Transverse colon (tissue), 4 donors: ENCODE measurements at regions of chr1 and their contacts with region 1.

Region 1: GRCh38 chr1:151399890-151400495 is 620 bp downstream of the PSMB4 start:
- DNase-seq: no peak
- H3K4me3 ChIP-seq: peak overlapping the region; percentile 78 to 100 (median 83)
- H3K27ac ChIP-seq: peak overlapping the region; percentile 89 to 97 (median 92)
- H3K4me1 ChIP-seq: peaks cover 7 to 17% (median 8%) of the 10 kb centered on the region in 4 donors
- H3K27me3 ChIP-seq: no peaks in the 10 kb centered on the region
- CTCF ChIP-seq: no peak
- EP300 ChIP-seq: no peak
- POLR2A ChIP-seq: no peak

Region 2: GRCh38 chr1:151309811-151310323 is 90.1 kb before region 1 on chr1:
- in situ Hi-C with region 1: loop called in 1 of 4 experiments (anchors 10 kb)
- intact Hi-C with region 1: no loop called
- DNase-seq: no peak
- H3K4me3 ChIP-seq: no peak overlapping the region
- H3K27ac ChIP-seq: peak overlapping the region; percentile 70 to 82 (median 78)
- H3K4me1 ChIP-seq: peaks cover 7 to 48% (median 36%) of the 10 kb centered on the region in 4 donors
- H3K27me3 ChIP-seq: no peaks in the 10 kb centered on the region
- CTCF ChIP-seq: no peak
- EP300 ChIP-seq: no peak
- POLR2A ChIP-seq: no peak

Region 3: GRCh38 chr1:151372061-151372934 is 27.7 kb before region 1 on chr1 and contains the start of gene SELENBP1:
- in situ Hi-C with region 1: no loop called
- intact Hi-C with region 1: loop called (anchors 2 kb)
- DNase-seq: peak; percentile 94
- H3K4me3 ChIP-seq: peak within 1 kb of the TSS; percentile 36 to 63 (median 45)
- H3K27ac ChIP-seq: peak within 1 kb of the TSS; percentile 84 to 92 (median 87)
- H3K4me1 ChIP-seq: peaks cover 13 to 81% (median 49%) of the 10 kb centered on the region in 4 donors
- H3K27me3 ChIP-seq: no peaks in the 10 kb centered on the region
- CTCF ChIP-seq: no peak
- EP300 ChIP-seq: no peak
- POLR2A ChIP-seq: peak; percentile 98
- total RNA-seq, gene SELENBP1: 1,079 to 3,856 (median 3,214) TPM